Activated CD4-positive, alpha-beta memory T cell treated with anti-CD3 and anti-CD28 coated beads for 36 hours (primary cell): ENCODE measurements at regions of chr18 and their contacts with region 1.

Region 1: GRCh38 chr18:13216092-13216582 is 2.4 kb upstream of the LDLRAD4 start:
- DNase-seq: peak; percentile 77
- H3K4me3 Mint-ChIP-seq: peak overlapping the region; percentile 67
- H3K27ac Mint-ChIP-seq: no peak overlapping the region
- H3K4me1 Mint-ChIP-seq: peaks cover 19% of the 10 kb centered on the region
- H3K27me3 Mint-ChIP-seq: peaks cover 40% of the 10 kb centered on the region

Region 2: DNA sequence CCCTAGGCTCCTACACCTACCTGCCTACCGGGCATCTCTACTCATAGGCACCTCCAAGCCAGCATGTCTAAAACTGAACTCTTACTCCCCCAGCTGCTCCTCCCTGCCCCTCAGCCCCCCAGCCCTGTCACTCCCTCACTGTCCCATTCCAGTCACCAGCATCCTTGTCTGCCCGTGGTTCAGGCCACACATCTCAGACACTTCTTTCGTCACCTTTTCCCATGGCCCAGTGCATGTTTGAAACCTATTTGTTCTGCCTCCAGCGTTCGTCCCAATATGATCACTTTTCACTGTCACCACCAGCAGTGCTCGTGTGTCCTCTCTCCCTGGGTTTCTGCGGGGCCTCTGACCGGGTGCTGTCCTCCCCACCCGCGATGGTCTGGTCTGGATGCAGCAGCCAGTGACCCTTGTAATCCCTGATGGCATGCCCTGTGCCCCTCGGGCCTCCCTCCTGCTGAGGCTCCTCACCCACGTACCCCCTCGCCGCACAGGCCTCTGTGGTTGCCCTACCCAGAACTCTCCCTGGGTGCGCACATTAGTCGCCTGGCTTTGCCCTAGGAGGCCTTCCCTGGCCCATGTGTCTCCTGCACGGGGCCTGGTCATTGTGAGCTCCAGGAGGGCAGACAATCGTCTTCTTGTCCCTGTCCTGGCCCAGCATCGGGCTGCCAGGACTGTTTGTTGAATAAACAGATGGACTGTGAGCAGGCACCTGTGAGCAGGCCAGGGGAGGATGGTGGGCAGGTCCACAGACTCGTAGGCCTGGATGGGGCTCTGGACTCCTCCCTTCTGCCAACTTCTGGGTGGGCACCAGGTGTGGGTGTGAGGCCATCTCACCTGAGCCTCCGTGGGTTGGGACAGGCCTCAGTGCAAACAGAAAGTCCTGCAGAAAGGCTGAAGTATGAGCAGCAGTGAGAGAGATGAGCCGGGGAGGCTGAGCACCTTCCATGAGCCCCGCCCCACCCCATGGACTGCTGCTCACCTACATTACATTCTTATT is 17.9 kb after region 1 on chr18:
- CTCF ChIA-PET with region 1: no interaction called
- POLR2A ChIA-PET with region 1: no interaction called
- intact Hi-C with region 1: no loop called
- DNase-seq: peak; percentile 6
- H3K4me3 Mint-ChIP-seq: no peak overlapping the region
- H3K27ac Mint-ChIP-seq: no peak overlapping the region
- H3K4me1 Mint-ChIP-seq: no peaks in the 10 kb centered on the region
- H3K27me3 Mint-ChIP-seq: no peaks in the 10 kb centered on the region

Region 3: GRCh38 chr18:13268158-13269012 is 52.2 kb after region 1 on chr18:
- CTCF ChIA-PET with region 1: interaction called, 19 read pairs
- POLR2A ChIA-PET with region 1: interaction called, 4 read pairs
- intact Hi-C with region 1: loop called (anchors 1 kb)
- DNase-seq: no peak
- H3K4me3 Mint-ChIP-seq: peak overlapping the region; percentile 7
- H3K27ac Mint-ChIP-seq: peak overlapping the region; percentile 92
- H3K4me1 Mint-ChIP-seq: peaks cover 71% of the 10 kb centered on the region
- H3K27me3 Mint-ChIP-seq: peaks cover 12% of the 10 kb centered on the region

Region 4: DNA sequence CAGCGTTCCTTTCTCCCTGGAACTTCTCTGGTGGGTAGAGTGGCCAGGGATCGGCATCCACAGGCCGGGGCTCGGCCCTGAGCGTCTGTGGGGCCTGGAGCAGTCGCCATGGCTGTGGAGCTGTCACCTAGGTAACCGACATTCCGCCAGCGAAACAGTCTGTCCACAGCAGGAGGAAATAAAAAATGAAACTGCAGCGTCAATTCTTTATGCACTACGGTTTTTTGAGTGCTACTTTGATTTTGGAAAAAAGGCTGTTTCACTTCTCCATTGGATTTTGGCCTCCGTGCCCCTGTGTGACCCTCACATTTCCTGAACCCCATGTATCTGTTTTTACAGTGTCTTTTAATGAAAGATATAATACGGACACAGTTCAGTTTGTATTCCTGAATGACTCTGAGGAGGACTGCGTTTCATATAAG is 165.8 kb after region 1 on chr18:
- CTCF ChIA-PET with region 1: interaction called, 59 read pairs
- POLR2A ChIA-PET with region 1: interaction called, 10 read pairs
- intact Hi-C with region 1: no loop called
- DNase-seq: peak; percentile 58
- H3K4me3 Mint-ChIP-seq: peak overlapping the region; percentile 73
- H3K27ac Mint-ChIP-seq: peak overlapping the region; percentile 97
- H3K4me1 Mint-ChIP-seq: peaks cover 74% of the 10 kb centered on the region
- H3K27me3 Mint-ChIP-seq: no peaks in the 10 kb centered on the region

Region 5: DNA sequence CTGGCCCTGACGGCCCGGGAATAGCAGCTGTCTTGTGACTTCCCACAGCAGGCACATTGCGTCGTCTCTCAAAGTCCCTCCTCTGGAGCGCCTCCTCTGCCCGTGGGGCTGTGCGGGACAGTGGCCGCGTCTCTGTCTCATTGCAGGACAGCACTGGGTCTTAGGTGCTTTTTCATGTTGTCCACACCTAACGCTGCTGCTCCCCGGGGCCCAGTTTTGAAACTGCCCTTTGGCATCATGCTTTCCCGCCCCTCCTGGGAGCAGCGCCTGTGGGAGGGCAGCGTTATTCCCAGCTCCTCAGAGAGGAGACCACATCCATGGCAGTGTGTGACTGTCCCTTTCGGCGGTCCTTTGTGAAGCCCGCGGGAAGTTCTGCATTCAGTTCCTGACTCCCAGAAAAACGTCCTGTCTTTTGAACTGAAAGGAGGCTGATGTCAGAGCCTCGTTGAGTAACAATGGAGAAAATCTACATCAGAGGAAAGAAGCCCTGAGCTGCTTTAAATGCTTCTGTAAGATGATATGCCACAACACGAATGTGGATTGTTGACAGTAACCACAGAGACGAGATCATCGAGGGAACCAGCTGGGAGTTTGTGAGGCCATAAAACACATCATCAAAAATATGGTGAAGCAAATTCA is 284.2 kb after region 1 on chr18:
- CTCF ChIA-PET with region 1: interaction called, 10 read pairs
- POLR2A ChIA-PET with region 1: interaction called, 4 read pairs
- intact Hi-C with region 1: loop called (anchors 1 kb)
- DNase-seq: peak; percentile 27
- H3K4me3 Mint-ChIP-seq: no peak overlapping the region
- H3K27ac Mint-ChIP-seq: no peak overlapping the region
- H3K4me1 Mint-ChIP-seq: peaks cover 36% of the 10 kb centered on the region
- H3K27me3 Mint-ChIP-seq: no peaks in the 10 kb centered on the region

Region 6: GRCh38 chr18:13558124-13558523 is 342.0 kb after region 1 on chr18:
- CTCF ChIA-PET with region 1: interaction called, 21 read pairs
- POLR2A ChIA-PET with region 1: no interaction called
- intact Hi-C with region 1: no loop called
- DNase-seq: peak; percentile 43
- H3K4me3 Mint-ChIP-seq: no peak overlapping the region
- H3K27ac Mint-ChIP-seq: no peak overlapping the region
- H3K4me1 Mint-ChIP-seq: peaks cover 38% of the 10 kb centered on the region
- H3K27me3 Mint-ChIP-seq: no peaks in the 10 kb centered on the region

Region 7: DNA sequence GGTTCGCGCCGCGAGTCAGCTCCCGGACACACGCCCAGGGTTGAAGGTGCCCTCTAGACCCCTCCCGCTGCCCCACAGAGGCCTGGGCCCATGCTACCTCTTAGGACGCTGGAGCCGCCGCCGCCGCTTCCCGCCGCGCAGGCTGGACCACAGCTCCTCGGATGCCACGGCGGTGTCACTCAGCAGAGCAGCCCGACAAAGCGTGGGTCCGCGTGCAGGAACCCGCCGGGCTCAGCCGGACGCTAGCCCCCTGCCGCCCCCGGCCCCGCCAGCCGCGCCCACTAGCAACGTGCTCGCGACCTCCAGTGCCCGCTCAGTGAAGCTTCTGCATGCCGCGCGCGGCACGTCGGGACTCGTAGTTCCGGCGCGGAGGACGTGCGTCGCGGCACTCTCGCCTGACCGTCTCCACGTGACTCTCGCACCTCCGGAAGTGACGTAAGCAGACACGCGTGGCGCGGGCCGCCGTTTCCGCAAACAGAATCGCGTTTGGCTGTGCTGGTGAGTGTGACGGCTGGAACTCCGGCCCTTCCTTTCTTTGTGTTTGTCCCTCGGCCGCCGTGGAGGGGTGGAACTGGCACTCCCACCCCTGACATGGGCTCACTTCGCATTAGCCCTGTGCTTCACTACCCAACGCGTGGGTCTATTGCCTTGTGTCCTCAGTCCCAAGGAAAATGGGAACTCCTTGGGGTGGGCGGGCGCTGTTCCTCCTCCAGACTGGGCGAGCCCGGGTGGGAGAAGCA is 510.3 kb after region 1 on chr18 and contains the starts of genes FAM210A and RNMT:
- CTCF ChIA-PET with region 1: interaction called, 8 read pairs
- POLR2A ChIA-PET with region 1: no interaction called
- intact Hi-C with region 1: loop called (anchors 5 kb)
- DNase-seq: peak; percentile 96
- H3K4me3 Mint-ChIP-seq: peak within 1 kb of the TSS; percentile 83
- H3K27ac Mint-ChIP-seq: peak within 1 kb of the TSS; percentile 89
- H3K4me1 Mint-ChIP-seq: peaks cover 61% of the 10 kb centered on the region
- H3K27me3 Mint-ChIP-seq: no peaks in the 10 kb centered on the region
- total RNA-seq, gene FAM210A: 24.9 to 29.4 TPM
- total RNA-seq, gene RNMT: 41.2 to 43.6 TPM